ENCODE measurements at regions of chr15 and their contacts with region 1.

Region 1: GRCh38 chr15:33132722-33133345 is 61.7 kb downstream of the FMN1 start:
- DNase-seq: no peak
- ATAC-seq: peak; percentile 34 to 62

Region 2: DNA sequence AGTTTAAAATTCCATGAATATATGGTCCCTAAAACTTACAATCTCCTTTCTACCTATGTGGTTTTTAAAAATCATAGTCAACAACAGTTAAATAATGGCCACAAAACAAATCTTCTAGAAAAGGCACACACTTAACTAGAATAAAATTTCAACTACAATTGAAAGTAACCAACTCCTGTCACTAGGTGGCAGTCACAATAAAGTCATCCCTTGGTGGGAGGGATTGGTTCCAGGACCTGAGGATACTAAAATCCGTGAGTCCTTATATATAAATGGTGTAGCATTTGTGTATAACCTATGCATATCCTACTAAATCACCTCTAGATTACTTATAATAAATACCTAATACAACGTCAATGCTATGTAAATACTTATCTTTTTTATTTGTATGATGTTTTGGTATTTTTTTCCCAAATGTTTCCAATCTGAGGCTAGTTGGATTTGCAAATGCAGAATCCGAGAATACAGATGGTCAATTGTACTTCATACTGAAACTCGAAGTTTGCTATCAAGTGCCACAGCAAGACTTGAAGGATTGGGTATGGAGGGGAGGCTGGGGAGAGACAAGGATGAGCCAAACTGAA is 110.9 kb before region 1 on chr15:
- intact Hi-C with region 1: loop called in 1 of 2 experiments (anchors 5 kb)
- DNase-seq: no peak
- ATAC-seq: peak; percentile 63 to 70

Region 3: GRCh38 chr15:33086507-33087121 is 46.2 kb before region 1 on chr15:
- intact Hi-C with region 1: loop called in 1 of 2 experiments (anchors 2 kb)
- DNase-seq: no peak
- ATAC-seq: peak in 1 of 2 donors; percentile 47

Measured in left cardiac atrium (tissue), 4 donors.